Transverse colon (tissue), 4 donors: ENCODE measurements at regions of chr3 and their contacts with region 1.

Region 1: GRCh38 chr3:182129740-182130139 is 418.0 kb downstream of the SOX2 start:
- DNase-seq: no peak
- H3K4me3 ChIP-seq: no peak overlapping the region
- H3K27ac ChIP-seq: no peak overlapping the region
- H3K4me1 ChIP-seq: no peaks in the 10 kb centered on the region
- H3K27me3 ChIP-seq: no peaks in the 10 kb centered on the region
- CTCF ChIP-seq: no peak
- EP300 ChIP-seq: no peak
- POLR2A ChIP-seq: no peak

Region 2: DNA sequence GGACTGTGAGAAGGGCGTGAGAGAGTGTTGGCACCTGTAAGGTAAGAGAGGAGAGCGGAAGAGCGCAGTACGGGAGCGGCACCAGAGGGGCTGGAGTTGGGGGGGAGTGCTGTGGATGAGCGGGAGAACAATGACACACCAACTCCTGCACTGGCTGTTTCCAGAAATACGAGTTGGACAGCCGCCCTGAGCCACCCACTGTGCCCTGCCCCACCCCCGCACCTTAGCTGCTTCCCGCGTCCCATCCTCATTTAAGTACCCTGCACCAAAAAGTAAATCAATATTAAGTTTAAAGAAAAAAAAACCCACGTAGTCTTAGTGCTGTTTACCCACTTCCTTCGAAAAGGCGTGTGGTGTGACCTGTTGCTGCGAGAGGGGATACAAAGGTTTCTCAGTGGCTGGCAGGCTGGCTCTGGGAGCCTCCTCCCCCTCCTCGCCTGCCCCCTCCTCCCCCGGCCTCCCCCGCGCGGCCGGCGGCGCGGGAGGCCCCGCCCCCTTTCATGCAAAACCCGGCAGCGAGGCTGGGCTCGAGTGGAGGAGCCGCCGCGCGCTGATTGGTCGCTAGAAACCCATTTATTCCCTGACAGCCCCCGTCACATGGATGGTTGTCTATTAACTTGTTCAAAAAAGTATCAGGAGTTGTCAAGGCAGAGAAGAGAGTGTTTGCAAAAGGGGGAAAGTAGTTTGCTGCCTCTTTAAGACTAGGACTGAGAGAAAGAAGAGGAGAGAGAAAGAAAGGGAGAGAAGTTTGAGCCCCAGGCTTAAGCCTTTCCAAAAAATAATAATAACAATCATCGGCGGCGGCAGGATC is 418.2 kb before region 1 on chr3 and contains the start of gene SOX2:
- in situ Hi-C with region 1: no loop called
- intact Hi-C with region 1: no loop called
- DNase-seq: peak; percentile 48
- H3K4me3 ChIP-seq: peak within 1 kb of the TSS in 3 of 4 donors; percentile 14 to 46 (median 20)
- H3K27ac ChIP-seq: peak within 1 kb of the TSS in 1 of 4 donors; percentile 26
- H3K4me1 ChIP-seq: peaks cover 11 to 35% (median 22%) of the 10 kb centered on the region in 4 donors
- H3K27me3 ChIP-seq: peaks cover 100% of the 10 kb centered on the region
- CTCF ChIP-seq: no peak
- EP300 ChIP-seq: no peak
- POLR2A ChIP-seq: no peak
- total RNA-seq, gene SOX2: 0.60 to 3.2 (median 0.82) TPM in 3 of 4 donors, not detected in the other

Region 3: DNA sequence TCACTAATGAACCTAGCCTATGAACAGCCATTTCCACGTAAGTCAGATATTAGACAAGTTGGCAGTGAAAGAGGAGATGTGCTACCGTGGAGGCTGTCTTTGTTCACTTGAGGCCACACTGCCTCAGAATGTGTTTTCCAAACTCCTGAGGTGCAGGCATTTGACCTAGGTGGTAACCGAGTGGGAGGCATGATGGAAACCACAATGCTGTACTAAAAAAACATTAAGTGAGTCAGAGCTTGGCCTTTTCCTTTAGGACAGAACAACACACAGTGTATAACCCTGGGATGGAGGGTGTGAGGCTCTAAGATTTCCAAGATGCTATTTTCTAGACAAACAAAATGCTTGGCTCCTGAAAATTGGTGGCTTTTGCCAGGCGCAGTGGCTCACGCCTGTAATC is 11.7 kb before region 1 on chr3:
- in situ Hi-C with region 1: no loop called
- intact Hi-C with region 1: loop called (anchors 1 kb)
- DNase-seq: no peak
- H3K4me3 ChIP-seq: no peak overlapping the region
- H3K27ac ChIP-seq: no peak overlapping the region
- H3K4me1 ChIP-seq: no peaks in the 10 kb centered on the region
- H3K27me3 ChIP-seq: no peaks in the 10 kb centered on the region
- CTCF ChIP-seq: no peak
- EP300 ChIP-seq: no peak
- POLR2A ChIP-seq: no peak

Region 4: DNA sequence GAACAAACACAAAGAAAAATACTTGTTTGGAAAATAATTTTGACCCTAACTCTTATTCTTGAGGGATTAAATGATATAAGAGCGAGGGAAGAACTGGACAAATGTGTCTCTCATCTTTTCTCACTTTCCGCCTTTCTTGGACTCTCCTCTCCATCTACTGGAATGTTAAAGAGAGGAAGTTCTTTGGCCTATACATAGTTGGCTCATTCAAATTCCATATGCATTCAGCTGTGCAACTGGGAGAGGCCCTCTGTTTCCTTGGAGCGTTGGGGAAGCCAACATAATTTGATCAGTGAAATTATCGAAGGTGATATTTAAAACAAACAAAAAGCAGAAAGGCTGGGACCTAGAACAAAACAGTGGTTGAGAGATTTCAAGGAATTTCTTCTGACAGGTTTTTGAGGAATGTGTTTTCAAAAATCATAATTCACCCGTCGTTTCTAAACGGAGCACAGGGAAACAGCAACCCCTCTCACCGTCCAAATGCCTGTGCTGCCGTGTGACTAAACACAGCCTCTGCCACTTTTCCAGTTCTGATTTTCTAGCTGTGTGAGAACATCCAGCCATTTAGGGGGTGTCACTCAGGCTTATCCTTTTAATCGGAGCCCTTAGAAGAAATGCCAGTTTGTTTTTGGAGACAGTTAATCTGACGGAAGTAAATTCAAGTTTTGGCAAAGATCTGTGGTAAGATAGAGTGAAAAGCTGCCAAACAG is 71.9 kb after region 1 on chr3:
- in situ Hi-C with region 1: no loop called
- intact Hi-C with region 1: no loop called
- DNase-seq: no peak
- H3K4me3 ChIP-seq: no peak overlapping the region
- H3K27ac ChIP-seq: no peak overlapping the region
- H3K4me1 ChIP-seq: no peaks in the 10 kb centered on the region
- H3K27me3 ChIP-seq: no peaks in the 10 kb centered on the region
- CTCF ChIP-seq: no peak
- EP300 ChIP-seq: no peak
- POLR2A ChIP-seq: no peak

Region 5: DNA sequence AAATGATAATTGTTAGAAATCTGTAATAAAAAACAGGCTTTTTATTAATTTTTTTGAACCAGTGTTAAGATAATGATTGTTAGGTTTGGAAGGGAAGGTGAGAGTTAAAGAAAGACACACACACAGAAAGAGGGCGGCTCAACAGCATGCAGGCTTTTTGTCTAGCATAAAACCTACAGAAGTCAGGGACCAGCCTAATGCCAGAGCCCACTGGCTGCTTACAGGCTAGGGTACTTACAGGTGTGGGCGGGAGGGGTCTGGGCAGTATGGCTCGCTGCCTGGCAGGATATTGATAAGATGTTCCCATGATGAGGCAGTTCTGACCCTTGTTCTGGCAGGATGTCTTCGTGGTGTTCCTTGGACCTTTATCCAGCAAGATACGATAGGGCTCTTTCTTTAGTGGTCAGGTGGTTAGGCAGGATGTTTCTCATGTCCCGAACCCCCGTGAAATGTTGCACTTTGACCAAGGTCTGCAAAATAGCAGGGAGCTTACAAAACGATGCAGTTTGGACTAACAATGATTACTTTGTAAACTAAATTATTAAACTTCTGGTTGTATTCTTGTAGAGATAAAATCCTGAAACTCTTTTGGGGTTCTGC is 765.9 kb after region 1 on chr3:
- in situ Hi-C with region 1: no loop called
- intact Hi-C with region 1: no loop called
- DNase-seq: no peak
- H3K4me3 ChIP-seq: no peak overlapping the region
- H3K27ac ChIP-seq: no peak overlapping the region
- H3K4me1 ChIP-seq: no peaks in the 10 kb centered on the region
- H3K27me3 ChIP-seq: no peaks in the 10 kb centered on the region
- CTCF ChIP-seq: no peak
- EP300 ChIP-seq: no peak
- POLR2A ChIP-seq: no peak